ENCODE measurements at regions of chr9 and their contacts with region 1.

Region 1: GRCh38 chr9:111916234-111916645 is 19.6 kb downstream of the UGCG start:
- DNase-seq: no peak
- H3K4me3 Mint-ChIP-seq: peak overlapping the region; percentile 13
- H3K27ac Mint-ChIP-seq: peak overlapping the region; percentile 72
- H3K4me1 Mint-ChIP-seq: peaks cover 37% of the 10 kb centered on the region
- H3K27me3 Mint-ChIP-seq: no peaks in the 10 kb centered on the region

Region 2: GRCh38 chr9:111805830-111806241 is 110.4 kb before region 1 on chr9:
- intact Hi-C with region 1: no loop called
- DNase-seq: no peak
- H3K4me3 Mint-ChIP-seq: no peak overlapping the region
- H3K27ac Mint-ChIP-seq: no peak overlapping the region
- H3K4me1 Mint-ChIP-seq: peaks cover 27% of the 10 kb centered on the region
- H3K27me3 Mint-ChIP-seq: no peaks in the 10 kb centered on the region

Region 3: DNA sequence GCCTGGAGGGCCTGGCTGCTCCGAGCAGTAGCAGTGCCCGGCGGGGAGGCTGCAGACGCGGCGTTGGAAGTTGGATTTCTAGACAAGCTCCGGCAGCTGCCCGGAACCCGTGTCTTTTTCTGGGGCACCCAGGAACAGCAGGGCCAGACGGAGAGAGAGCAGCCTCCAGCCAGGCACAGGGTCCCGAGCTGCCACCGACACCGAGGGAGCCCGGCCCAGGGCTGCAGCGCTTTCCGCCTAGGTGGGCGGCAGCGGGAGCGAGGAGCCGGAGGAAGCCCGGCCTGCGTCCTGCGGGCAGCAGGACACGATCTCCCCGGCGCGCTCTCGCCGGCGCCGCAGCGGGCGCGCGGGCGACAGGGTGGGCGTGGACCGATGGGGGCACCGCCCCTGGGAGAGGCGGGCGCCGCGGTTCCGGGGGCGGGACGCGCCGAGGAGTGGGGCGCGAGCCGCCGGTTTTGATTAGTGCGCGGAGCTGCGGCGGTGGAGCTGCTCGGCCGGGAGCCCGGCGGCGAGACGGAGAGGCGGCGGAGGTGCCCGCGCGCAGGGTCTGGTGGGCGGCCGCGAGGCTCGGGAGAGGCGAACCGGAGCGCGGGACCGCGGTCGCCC is 19.8 kb before region 1 on chr9 and contains the start of gene UGCG:
- intact Hi-C with region 1: loop called (anchors 1 kb)
- DNase-seq: peak; percentile 85
- H3K4me3 Mint-ChIP-seq: peak within 1 kb of the TSS; percentile 84
- H3K27ac Mint-ChIP-seq: peak within 1 kb of the TSS; percentile 83
- H3K4me1 Mint-ChIP-seq: peaks cover 9% of the 10 kb centered on the region
- H3K27me3 Mint-ChIP-seq: peaks cover 3% of the 10 kb centered on the region
- total RNA-seq, gene UGCG: 14.4 and 16.6 TPM in 2 replicates

Region 4: DNA sequence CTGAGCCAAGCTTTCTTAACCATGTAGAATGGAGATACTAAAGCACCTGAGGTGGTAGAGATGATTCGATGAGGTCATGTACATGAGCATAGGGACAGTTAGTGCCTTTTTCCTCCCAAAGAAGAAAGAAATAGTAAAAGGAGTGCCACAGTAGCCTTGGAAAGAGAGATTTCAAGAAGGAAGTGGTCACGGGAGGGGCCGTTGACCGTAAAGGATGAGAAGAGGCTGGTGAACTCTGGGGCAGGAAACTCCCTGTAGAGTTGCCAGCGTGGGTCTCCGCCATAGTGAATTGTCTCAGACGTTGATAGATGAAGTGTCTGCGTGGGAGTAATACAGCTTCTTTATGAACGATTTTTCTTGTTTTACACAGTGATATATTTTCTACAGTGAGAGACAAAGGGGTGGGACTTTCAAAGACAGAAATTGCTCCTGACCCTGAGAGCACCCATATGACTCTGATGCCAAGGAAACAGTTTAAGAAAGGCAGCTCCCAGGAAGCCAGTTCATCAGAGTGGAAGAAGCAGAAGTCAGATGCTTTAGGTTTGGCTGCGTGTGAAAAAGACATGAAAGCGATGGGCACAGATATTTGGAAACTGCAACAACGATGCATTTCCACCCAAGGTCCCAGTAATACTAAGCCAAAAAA is 21.7 kb after region 1 on chr9:
- intact Hi-C with region 1: loop called (anchors 1 kb)
- DNase-seq: peak; percentile 16
- H3K4me3 Mint-ChIP-seq: peak overlapping the region; percentile 41
- H3K27ac Mint-ChIP-seq: peak overlapping the region; percentile 85
- H3K4me1 Mint-ChIP-seq: peaks cover 23% of the 10 kb centered on the region
- H3K27me3 Mint-ChIP-seq: no peaks in the 10 kb centered on the region

Region 5: DNA sequence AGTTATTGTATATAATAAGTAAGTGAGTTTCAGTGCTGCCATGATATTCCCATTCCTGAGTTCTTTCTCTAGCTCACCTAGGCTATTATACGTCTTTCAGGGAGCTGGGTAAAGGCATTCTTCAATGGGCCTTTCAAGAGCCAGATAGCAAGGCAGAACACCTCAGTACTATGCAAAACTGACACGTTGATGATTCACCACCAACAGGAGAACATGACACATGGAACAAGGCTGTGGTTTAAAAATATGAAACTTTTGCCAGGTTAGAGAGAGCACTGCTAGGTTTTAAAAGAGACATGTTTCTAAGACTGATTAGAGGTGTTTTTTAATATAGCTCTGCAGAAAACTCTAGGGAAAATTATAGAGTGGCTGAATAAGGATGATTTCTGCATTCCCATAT is 76.3 kb after region 1 on chr9:
- intact Hi-C with region 1: loop called (anchors 1 kb)
- DNase-seq: no peak
- H3K4me3 Mint-ChIP-seq: no peak overlapping the region
- H3K27ac Mint-ChIP-seq: no peak overlapping the region
- H3K4me1 Mint-ChIP-seq: peaks cover 18% of the 10 kb centered on the region
- H3K27me3 Mint-ChIP-seq: peaks cover 9% of the 10 kb centered on the region

Region 6: DNA sequence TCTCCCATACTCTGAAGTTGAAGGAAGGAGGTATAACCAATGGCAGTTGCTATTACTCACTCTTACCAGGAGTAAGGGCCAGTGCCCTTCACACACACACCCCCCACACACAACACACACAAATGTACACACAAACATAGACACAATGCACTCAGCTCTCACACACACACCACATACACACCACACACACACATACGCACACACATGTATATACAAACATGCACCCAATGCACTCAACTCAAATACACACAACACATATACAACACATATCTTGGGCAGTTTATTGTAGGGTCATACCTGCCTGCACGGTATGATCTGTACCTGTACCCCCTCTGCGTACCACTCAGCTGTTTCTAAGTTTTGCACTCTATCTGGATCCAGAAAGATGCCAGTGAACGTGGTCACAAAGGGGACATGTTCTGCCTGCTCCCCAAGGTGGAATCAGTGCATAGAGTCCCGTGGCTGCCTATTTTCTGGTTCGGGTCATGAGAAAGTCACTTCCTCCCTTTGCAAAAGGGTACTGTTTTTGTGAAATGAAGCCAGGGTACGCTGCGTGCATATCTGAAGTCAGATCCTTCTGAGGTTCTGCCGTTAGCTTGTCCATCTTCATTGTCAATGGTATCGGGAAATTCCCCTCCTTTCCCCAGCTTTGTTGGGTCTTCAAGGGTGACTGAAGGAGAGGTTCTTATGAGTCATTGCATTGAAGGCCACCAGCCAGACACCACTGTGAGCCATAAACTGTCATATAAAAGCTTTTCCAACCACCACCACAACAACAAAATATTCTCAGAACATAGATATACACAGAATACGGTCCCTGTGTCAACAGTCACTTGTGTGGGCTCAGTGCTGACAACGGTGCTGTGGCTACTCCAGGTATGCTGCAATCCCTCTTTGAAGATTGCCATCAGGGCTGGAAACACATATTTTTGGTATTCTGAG is 112.3 kb after region 1 on chr9:
- intact Hi-C with region 1: loop called (anchors 1 kb)
- DNase-seq: no peak
- H3K4me3 Mint-ChIP-seq: no peak overlapping the region
- H3K27ac Mint-ChIP-seq: no peak overlapping the region
- H3K4me1 Mint-ChIP-seq: peaks cover 29% of the 10 kb centered on the region
- H3K27me3 Mint-ChIP-seq: peaks cover 7% of the 10 kb centered on the region

Region 7: DNA sequence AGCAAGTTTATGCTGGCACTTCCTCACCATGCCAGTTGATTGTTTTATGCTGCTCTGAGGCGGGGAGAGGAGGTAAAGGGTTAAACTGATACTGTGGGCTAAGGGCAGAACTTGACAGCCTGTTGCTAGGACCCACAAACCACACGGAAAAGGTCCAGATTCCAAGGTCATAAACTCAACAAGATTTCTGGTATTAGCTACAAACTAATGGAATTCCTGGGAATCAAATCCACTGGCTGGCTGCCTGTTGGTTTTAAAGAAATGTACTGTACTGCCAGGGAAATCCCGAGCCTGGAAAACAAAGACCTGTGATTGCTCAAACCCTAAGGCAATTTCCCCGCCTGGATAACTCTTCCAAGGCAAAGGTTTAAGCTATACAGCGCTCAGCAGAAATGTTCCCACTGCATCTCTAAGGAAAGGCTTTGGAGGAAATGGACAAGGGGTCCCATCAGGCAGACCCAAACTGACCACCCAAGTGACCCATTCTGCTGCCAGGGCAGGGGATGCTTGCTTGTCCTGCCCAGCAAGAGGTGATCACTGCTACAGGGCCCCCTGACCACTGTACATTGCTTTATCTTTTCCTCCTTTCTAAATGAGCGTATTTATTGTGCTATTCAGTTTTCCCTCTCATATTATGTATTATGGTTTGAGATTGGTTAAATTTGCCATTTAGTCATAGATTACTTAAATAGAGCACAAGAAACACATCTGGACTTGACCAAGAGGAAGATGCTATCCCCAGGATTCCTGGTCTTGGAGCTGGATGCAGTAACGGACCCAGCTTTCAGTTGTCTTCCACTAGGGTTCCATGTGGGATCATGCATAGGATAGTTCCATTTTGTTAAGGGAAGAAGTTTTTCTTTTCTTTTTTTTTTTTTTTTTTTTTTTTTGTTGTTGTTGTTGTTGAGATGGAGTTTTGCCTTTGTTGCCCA is 134.6 kb after region 1 on chr9:
- intact Hi-C with region 1: no loop called
- DNase-seq: no peak
- H3K4me3 Mint-ChIP-seq: no peak overlapping the region
- H3K27ac Mint-ChIP-seq: no peak overlapping the region
- H3K4me1 Mint-ChIP-seq: peaks cover 7% of the 10 kb centered on the region
- H3K27me3 Mint-ChIP-seq: peaks cover 3% of the 10 kb centered on the region

Region 8: GRCh38 chr9:112486221-112487007 is 570.2 kb after region 1 on chr9 and contains the start of gene KIAA1958:
- intact Hi-C with region 1: loop called (anchors 10 kb)
- DNase-seq: peak; percentile 86
- H3K4me3 Mint-ChIP-seq: peak within 1 kb of the TSS; percentile 98
- H3K27ac Mint-ChIP-seq: peak within 1 kb of the TSS; percentile 97
- H3K4me1 Mint-ChIP-seq: peaks cover 33% of the 10 kb centered on the region
- H3K27me3 Mint-ChIP-seq: no peaks in the 10 kb centered on the region
- total RNA-seq, gene KIAA1958: 10.7 and 11.4 TPM in 2 replicates

Measured in activated T-helper 2 cell treated with anti-CD3 and anti-CD28 coated beads, Interferon-gamma antibody, Interleukin-2, Interleukin-4, amounts not matched to agents 10 μg/mL and 5 μg/mL and 100 μg/mL, durations not matched to agents 14 hours and 24 hours and 36 hours (primary cell).